Breast epithelium (tissue), 4 donors: ENCODE measurements at regions of chr3 and their contacts with region 1.

Region 1: GRCh38 chr3:141370065-141370533 is 1.8 kb downstream of the ZBTB38 start:
- DNase-seq: peak in 1 of 2 donors; percentile 49
- H3K4me3 ChIP-seq: no peak overlapping the region
- H3K27ac ChIP-seq: peak overlapping the region; percentile 99 to 100
- H3K4me1 ChIP-seq: peaks cover 18 to 19% of the 10 kb centered on the region in 2 donors
- H3K27me3 ChIP-seq: no peaks in the 10 kb centered on the region
- CTCF ChIP-seq: peak in 1 of 3 donors; percentile 18
- POLR2A ChIP-seq: no peak

Region 2: DNA sequence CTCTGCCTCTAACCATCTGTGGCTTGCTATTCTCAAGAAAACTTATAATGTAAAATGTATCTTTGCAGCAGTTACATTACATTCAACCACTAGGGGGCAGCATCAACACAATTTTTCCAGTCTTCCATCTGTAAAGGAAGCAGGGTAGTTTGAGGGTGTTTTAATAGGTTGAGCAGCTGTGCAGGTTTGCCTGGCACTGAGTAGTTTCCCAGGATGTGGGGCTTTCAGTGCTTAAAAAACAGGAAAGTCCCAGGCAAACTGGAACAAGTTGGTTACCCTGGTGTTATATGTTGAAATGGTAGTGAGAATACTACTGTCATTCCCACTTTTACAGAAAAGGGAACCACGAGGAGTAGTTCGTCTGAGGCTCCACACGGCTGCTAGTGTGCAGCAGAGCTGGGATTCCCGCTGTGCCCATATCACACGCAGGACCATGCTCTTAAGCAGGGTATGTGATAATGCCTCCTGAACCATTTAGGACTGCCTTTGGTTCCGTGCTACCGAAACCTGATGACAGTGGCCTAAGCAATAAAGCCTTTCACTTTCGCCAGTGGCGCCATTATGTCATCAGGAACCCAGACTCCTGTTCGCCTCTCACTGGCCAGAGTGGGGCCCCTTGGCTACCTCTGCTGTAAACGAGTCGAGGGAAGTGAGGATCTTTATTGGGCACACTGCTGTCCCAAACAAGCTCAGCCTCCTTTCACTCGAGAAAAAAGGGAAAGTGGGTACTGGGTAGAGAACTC is 66.4 kb before region 1 on chr3:
- intact Hi-C with region 1: no loop called
- DNase-seq: peak in 1 of 2 donors; percentile 38
- H3K4me3 ChIP-seq: no peak overlapping the region
- H3K27ac ChIP-seq: no peak overlapping the region
- H3K4me1 ChIP-seq: no peaks in the 10 kb centered on the region
- H3K27me3 ChIP-seq: no peaks in the 10 kb centered on the region
- CTCF ChIP-seq: peak; percentile 69 to 79 (median 73)
- POLR2A ChIP-seq: no peak

Region 3: DNA sequence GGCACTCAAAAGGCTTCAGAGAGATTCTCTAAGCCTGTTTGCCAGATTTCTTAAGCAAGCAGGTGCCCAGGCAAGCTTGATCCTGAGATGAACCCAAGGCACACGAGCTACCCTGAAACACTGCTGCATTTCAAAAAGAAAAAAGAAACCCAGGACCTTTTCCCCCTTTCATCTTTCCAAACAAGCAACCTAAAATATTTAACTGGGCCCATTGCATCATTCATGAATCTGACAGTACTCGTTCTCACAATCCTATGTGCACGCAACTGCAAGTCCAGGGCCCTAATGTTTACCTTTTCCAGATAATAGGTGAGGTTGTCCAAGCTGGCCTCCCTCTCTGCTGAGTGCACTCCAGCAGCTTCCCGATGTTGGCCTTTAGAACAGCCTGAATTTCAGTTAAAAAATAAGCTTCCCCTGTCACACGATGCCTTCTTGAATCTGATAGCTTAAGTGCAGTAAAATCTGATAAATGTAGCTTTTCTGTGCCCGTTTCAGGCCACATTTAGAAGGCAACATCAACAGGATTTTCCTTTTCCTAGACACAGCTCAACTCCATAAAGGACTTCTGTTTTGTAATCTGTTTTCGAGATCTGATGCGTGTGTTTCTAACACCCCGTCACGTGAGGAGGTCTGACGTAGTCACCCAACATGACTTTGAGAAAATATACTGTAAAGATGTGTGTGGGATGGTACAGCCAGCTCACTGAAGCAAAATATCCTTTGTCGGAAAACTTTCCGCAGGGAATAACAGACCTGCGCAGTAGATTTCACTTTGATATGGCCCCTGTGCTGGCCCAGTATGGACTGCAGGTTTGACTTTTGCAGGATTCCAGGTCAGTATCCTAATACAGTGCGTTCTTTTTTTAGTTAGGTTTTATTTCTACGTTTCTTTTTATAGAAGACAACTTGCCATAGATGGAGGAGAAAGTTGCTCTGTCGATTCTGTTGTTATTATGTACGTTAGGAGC is 61.6 kb after region 1 on chr3:
- intact Hi-C with region 1: loop called (anchors 10 kb)
- DNase-seq: no peak
- H3K4me3 ChIP-seq: no peak overlapping the region
- H3K27ac ChIP-seq: peak overlapping the region in 1 of 2 donors; percentile 4
- H3K4me1 ChIP-seq: peaks cover 1 to 6% of the 10 kb centered on the region in 2 donors
- H3K27me3 ChIP-seq: no peaks in the 10 kb centered on the region
- CTCF ChIP-seq: no peak
- POLR2A ChIP-seq: no peak

Region 4: DNA sequence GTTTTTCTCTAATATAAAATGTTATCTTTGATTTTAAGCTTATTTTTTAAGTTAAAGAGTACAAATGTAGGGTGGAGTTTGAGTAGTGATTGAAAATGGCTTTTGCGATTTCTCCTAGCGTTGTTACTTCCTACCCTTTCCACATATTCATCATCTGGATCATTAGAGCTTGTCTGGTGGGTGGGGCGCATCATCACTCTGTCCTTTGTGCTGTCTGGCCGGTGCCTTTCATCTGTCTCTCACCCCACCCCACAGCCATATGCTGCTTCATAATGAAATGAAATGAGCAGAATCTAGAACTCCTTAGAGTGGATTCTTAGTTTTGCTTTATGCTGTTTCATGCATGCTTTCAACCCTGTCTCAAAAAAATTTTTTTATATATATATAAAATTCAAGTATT is 550.6 kb after region 1 on chr3:
- intact Hi-C with region 1: no loop called
- DNase-seq: no peak
- H3K4me3 ChIP-seq: no peak overlapping the region
- H3K27ac ChIP-seq: no peak overlapping the region
- H3K4me1 ChIP-seq: no peaks in the 10 kb centered on the region
- H3K27me3 ChIP-seq: no peaks in the 10 kb centered on the region
- CTCF ChIP-seq: no peak
- POLR2A ChIP-seq: no peak

Region 5: DNA sequence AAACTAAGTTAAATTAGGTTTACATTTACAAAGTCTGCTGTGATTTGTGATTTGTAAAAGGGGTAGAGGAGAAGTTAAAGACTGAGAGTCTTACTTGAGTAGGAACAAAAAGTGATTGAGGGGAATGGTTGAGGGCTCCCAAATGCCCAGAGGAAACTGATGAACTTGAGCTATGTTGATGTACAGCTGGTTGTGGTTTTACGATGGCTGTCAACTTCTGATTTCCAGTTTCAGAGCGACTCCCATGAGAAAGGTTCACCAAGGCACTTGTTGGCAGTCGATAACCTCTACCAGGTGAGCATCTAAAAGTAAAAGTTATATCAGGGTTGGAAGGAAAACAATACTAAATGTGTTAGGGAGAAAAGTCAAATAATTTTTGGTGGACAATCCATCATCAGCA is 986.7 kb after region 1 on chr3:
- intact Hi-C with region 1: loop called (anchors 5 kb)
- DNase-seq: no peak
- H3K4me3 ChIP-seq: no peak overlapping the region
- H3K27ac ChIP-seq: no peak overlapping the region
- H3K4me1 ChIP-seq: no peaks in the 10 kb centered on the region
- H3K27me3 ChIP-seq: no peaks in the 10 kb centered on the region
- CTCF ChIP-seq: no peak
- POLR2A ChIP-seq: no peak